Activated CD4-positive, alpha-beta T cell treated with anti-CD3 and anti-CD28 coated beads, Interleukin-2, amount 10 ng/mL, durations not matched to agents 7 days and 5 days (primary cell): ENCODE measurements at regions of chr7 and their contacts with region 1.

Region 1: DNA sequence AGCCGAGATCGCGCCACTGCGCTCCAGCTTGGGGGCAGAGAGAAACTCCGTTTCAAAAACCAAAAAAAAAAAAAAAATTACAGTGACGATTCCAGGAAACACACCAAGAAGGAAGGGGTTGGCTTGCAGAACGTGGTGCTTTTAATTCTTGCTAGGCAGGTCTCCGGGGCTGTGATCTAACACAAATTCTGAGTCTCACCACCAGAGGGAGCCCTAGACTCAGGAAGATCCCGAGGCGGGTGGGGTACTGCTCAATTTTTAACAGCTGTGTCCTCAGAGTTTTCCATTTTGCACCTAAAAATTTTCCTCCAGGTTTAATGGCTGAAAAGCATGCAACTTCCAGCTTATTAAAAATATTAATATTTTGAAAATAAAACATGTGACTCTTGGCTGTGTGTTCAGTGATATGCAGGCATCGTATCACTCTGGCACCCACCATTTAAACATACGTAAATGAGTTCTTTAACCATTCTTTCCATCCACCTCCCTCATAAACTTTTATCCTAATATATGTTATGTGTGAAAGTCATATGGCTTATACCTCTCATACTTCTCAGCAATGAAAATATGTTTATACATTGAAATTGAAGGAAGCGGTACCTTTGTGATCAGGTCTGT is 26.5 kb upstream of the NUB1 start:
- DNase-seq: peak; percentile 89
- H3K4me3 Mint-ChIP-seq: no peak overlapping the region
- H3K27ac Mint-ChIP-seq: peak overlapping the region; percentile 81
- H3K4me1 Mint-ChIP-seq: peaks cover 16% of the 10 kb centered on the region
- H3K27me3 Mint-ChIP-seq: no peaks in the 10 kb centered on the region

Region 2: GRCh38 chr7:151298765-151299164 is 16.4 kb before region 1 on chr7:
- CTCF ChIA-PET with region 1: no interaction called
- POLR2A ChIA-PET with region 1: no interaction called
- DNase-seq: no peak
- H3K4me3 Mint-ChIP-seq: no peak overlapping the region
- H3K27ac Mint-ChIP-seq: no peak overlapping the region
- H3K4me1 Mint-ChIP-seq: peaks cover 3% of the 10 kb centered on the region
- H3K27me3 Mint-ChIP-seq: peaks cover 37% of the 10 kb centered on the region

Region 3: GRCh38 chr7:151327659-151328058 is 12.5 kb after region 1 on chr7:
- CTCF ChIA-PET with region 1: interaction called, 10 read pairs
- POLR2A ChIA-PET with region 1: no interaction called
- DNase-seq: no peak
- H3K4me3 Mint-ChIP-seq: no peak overlapping the region
- H3K27ac Mint-ChIP-seq: no peak overlapping the region
- H3K4me1 Mint-ChIP-seq: no peaks in the 10 kb centered on the region
- H3K27me3 Mint-ChIP-seq: peaks cover 16% of the 10 kb centered on the region

Region 4: DNA sequence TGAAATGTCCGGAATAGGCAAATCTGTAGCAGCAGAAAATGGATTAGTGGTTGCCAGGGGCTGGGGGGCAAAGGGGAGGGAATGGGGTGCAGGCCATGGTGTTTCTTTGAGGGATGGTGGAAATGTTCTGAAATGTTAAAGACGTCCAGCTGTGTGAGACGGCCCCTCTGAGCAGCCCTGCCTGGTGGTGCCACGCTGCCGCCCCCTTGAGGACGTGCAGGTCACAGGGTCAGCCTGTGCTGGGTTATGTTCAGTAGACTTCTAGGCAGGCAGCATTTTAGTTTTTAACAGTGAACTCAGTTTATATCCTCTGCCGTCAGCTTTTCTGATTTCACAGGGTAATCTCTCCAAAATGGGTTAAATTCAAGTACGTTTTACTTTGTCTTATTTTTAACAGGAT is 35.9 kb after region 1 on chr7:
- CTCF ChIA-PET with region 1: interaction called, 18 read pairs
- POLR2A ChIA-PET with region 1: interaction called, 6 read pairs
- DNase-seq: peak; percentile 40
- H3K4me3 Mint-ChIP-seq: peak overlapping the region; percentile 45
- H3K27ac Mint-ChIP-seq: peak overlapping the region; percentile 92
- H3K4me1 Mint-ChIP-seq: peaks cover 59% of the 10 kb centered on the region
- H3K27me3 Mint-ChIP-seq: no peaks in the 10 kb centered on the region